ENCODE measurements at regions of chr2 and their contacts with region 1.

Region 1: GRCh38 chr2:152005607-152006006 is 93.2 kb downstream of the CACNB4 start:
- DNase-seq: no peak
- ATAC-seq: no peak
- H3K4me3 ChIP-seq: no peak overlapping the region
- H3K27ac ChIP-seq: no peak overlapping the region
- H3K4me1 ChIP-seq: no peaks in the 10 kb centered on the region
- H3K27me3 ChIP-seq: no peaks in the 10 kb centered on the region

Region 2: GRCh38 chr2:151828143-151828889 is 177.3 kb before region 1 on chr2 and contains the start of gene ARL5A:
- intact Hi-C with region 1: loop called in 1 of 4 experiments (anchors 10 kb)
- DNase-seq: peak; percentile 95 to 98 (median 98)
- ATAC-seq: peak; percentile 98 to 99
- H3K4me3 ChIP-seq: peak within 1 kb of the TSS; percentile 75
- H3K27ac ChIP-seq: peak within 1 kb of the TSS; percentile 70
- H3K4me1 ChIP-seq: peaks cover 4% of the 10 kb centered on the region
- H3K27me3 ChIP-seq: no peaks in the 10 kb centered on the region
- total RNA-seq, gene ARL5A: 81.5 to 119 (median 99.5) TPM

Measured in right cardiac atrium (tissue), 5 donors.